Aorta (tissue), 5 donors: ENCODE measurements at regions of chr5 and their contacts with region 1.

Region 1: DNA sequence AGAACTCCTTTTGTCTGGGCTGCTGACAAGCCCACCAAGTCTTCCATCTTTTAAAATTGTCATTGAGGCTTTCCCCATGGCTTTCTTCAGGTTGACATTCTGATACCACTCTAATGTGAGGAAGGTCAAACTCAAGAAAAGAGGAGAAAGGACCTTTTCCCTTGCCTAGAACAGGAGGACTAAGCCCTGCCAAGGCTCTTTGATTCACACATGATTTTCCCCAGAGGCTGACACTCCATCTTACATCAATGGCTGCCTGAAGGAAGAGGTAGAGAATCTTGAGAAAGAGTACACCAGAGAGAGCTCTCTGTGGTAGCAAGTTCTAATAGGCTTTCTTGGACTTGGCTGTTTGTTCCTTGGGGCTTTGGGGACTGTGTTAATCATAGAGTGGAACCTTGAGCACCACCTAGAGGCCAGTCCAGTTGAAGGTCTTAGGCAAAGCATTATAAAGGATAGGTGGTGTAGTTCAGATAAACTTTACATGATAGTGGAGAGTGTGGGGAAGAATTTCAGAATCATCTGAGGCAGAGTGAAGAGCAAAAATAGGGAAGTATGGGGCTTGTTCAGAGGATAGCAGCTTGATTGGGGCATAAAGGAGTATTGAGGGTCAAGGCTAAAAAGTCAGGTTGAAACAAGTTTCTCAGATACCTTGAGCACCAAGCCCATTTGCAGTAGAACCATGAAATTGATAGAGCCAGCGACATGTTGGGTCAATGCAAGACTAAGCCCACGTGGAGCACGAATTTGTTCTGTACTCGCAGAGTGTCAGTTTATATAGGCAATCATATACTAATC is 36.7 kb downstream of the NDFIP1 start:
- DNase-seq: peak in 1 of 2 donors; percentile 66
- ATAC-seq: peak; percentile 87
- H3K4me3 ChIP-seq: no peak overlapping the region
- H3K27ac ChIP-seq: peak overlapping the region; percentile 22 to 51
- H3K4me1 ChIP-seq: peaks cover 0 to 2% of the 10 kb centered on the region in 2 donors
- H3K27me3 ChIP-seq: no peaks in the 10 kb centered on the region

Region 2: DNA sequence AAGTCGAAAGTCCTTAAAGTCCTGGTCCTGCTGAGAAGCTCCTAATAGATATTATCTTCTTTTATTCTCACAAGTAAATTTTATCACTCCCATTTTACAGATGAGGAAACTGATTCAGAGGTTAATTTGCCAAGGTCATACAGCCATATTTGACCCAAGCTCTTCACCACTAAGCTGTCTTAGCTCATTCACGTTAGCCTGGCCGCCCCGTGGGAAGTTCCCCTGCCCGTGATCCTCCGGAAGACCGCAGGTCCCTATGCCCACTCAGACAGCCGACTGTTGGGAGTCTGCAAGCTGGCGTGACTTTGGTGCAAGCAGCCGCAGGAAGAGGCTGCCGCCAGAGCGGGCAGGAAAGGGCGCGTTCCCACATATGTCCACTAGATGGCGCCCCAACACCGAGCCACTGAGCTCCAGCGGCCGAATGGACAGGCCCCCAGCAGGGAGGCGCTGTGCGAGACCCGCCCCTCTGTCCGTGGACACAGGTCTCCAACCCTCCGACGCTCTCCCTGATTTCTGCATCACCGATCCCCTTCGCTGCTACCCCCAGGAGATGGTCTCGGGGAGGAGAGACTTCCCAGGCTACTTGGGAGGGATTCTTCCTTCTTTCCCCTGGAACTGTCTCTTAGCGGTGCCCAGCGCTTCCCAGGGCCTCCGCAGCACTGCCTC is 453.3 kb before region 1 on chr5:
- intact Hi-C with region 1: loop called in 1 of 2 experiments (anchors 10 kb)
- DNase-seq: peak; percentile 89 to 94
- ATAC-seq: peak; percentile 94
- H3K4me3 ChIP-seq: no peak overlapping the region
- H3K27ac ChIP-seq: no peak overlapping the region
- H3K4me1 ChIP-seq: no peaks in the 10 kb centered on the region
- H3K27me3 ChIP-seq: no peaks in the 10 kb centered on the region

Region 3: DNA sequence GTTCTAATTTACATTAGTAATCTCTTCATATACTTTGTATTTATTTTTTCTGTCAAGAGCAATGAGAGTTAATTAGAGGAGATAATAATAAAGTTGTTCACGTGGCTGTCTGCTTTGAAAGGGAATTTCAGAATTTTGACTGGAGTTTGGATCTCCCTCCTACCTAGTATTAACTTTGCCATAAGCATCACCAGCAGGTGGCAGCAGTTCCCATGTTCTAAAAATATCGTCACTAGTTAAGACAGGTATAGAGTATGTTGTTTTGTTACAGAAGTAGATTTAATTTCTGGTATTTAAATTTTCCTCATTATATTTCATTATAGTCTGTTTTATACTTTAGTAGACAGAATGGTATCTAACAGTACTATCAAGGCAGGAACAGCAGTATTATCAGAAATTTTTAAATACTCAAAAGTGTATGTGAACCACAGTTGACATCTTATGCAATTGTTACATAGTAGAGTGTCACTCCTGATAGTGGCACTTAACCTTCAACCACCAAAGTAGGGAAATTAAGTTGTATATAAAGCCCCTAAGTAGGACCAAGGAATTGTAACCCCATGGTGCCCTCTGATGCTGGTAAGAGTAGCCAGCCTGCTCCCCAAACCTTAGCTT is 152.8 kb before region 1 on chr5:
- intact Hi-C with region 1: loop called (anchors 5 kb)
- DNase-seq: peak; percentile 70 to 83
- ATAC-seq: peak; percentile 70
- H3K4me3 ChIP-seq: no peak overlapping the region
- H3K27ac ChIP-seq: no peak overlapping the region
- H3K4me1 ChIP-seq: no peaks in the 10 kb centered on the region
- H3K27me3 ChIP-seq: no peaks in the 10 kb centered on the region

Region 4: GRCh38 chr5:142012792-142013388 is 132.4 kb before region 1 on chr5 and contains the start of gene GNPDA1:
- intact Hi-C with region 1: loop called (anchors 5 kb)
- DNase-seq: peak; percentile 89 to 93
- ATAC-seq: peak; percentile 93
- H3K4me3 ChIP-seq: peak within 1 kb of the TSS; percentile 63 to 83
- H3K27ac ChIP-seq: peak within 1 kb of the TSS in 1 of 2 donors; percentile 69
- H3K4me1 ChIP-seq: no peaks in the 10 kb centered on the region
- H3K27me3 ChIP-seq: no peaks in the 10 kb centered on the region
- total RNA-seq, gene GNPDA1: 18.7 to 21.5 TPM

Region 5: DNA sequence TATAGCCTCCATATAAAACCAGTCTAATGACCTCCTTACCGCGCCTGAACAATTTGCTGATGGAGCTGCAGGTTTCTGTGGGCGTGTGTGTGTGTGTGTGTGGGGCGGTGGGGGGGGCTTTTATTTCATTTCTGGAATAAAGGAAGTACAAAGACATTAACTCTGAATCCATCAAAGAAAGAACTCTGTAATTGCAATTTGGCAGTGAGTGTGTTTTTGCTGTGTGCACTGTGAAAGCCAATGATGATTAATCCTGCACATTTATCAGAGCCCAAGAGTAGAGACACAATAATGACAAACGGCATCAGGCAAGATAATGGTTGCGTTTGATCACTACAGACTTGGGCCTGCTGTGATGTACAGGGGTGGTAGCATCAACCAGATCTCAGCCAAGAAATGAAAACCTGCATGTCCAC is 66.0 kb before region 1 on chr5:
- intact Hi-C with region 1: no loop called
- DNase-seq: no peak
- ATAC-seq: no peak
- H3K4me3 ChIP-seq: no peak overlapping the region
- H3K27ac ChIP-seq: no peak overlapping the region
- H3K4me1 ChIP-seq: no peaks in the 10 kb centered on the region
- H3K27me3 ChIP-seq: no peaks in the 10 kb centered on the region

Region 6: GRCh38 chr5:142699184-142699720 is 553.9 kb after region 1 on chr5:
- intact Hi-C with region 1: loop called in 1 of 2 experiments (anchors 5 kb)
- DNase-seq: peak; percentile 92 to 94
- ATAC-seq: peak; percentile 96
- H3K4me3 ChIP-seq: no peak overlapping the region
- H3K27ac ChIP-seq: no peak overlapping the region
- H3K4me1 ChIP-seq: peaks cover 0 to 8% of the 10 kb centered on the region in 2 donors
- H3K27me3 ChIP-seq: no peaks in the 10 kb centered on the region